HepG2 (cell line): ENCODE measurements at regions of chr21 and their contacts with region 1.

Region 1: DNA sequence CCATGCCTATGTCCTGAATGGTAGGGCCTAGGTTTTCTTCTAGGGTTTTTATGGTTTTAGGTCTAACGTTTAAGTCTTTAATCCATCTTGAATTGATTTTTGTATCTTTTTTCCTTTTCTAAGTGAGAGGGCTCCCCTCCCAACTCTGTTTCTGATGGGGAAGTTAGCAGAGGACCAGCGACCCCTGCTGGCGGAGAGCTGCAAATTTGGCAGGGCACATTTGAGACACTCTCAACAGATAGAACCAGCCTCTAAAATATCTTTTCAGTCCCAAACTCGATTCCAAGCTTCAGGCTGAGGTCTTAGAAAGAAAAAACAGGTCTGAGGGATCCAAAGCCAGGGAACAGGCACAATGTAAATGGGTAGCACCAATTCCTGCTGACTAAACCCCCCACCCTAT is 32.5 kb downstream of the LRRC3 start:
- DNase-seq: peak; percentile 30
- ATAC-seq: no peak
- H3K4me3 ChIP-seq: no peak overlapping the region
- H3K27ac ChIP-seq: no peak overlapping the region
- H3K4me1 ChIP-seq: peaks cover 63% of the 10 kb centered on the region
- H3K27me3 ChIP-seq: no peaks in the 10 kb centered on the region; a peak in 1 of 5 replicates
- CTCF ChIP-seq: peak; percentile 76
- EP300 ChIP-seq: no peak
- POLR2A ChIP-seq: no peak
- RAD21 ChIP-seq: peak; percentile 31; the same call in 1 of the 2 replicates

Region 2: GRCh38 chr21:44299458-44300261 is 188.2 kb before region 1 on chr21 and contains the start of gene PFKL:
- CTCF ChIA-PET with region 1: no interaction called
- POLR2A ChIA-PET with region 1: interaction called, 23 read pairs
- in situ Hi-C with region 1: no loop called
- intact Hi-C with region 1: loop called (anchors 10 kb)
- DNase-seq: peak; percentile 24
- ATAC-seq: peak; percentile 31
- H3K4me3 ChIP-seq: peak within 1 kb of the TSS; percentile 66 to 80 (median 75)
- H3K27ac ChIP-seq: peak within 1 kb of the TSS; percentile 87
- H3K4me1 ChIP-seq: peaks cover 75% of the 10 kb centered on the region
- H3K27me3 ChIP-seq: peaks cover 9 to 26% of the 10 kb centered on the region in 2 experiments
- CTCF ChIP-seq: no peak; the same call in 1 of the 2 replicates
- EP300 ChIP-seq: no peak
- POLR2A ChIP-seq: peak in 1 of 2 experiments; percentile 49; a peak in 2 of 4 replicates
- RAD21 ChIP-seq: no peak; the same call in 1 of the 2 replicates
- total RNA-seq, gene PFKL: 87.6 and 106 TPM in 2 replicates

Region 3: GRCh38 chr21:44414291-44415072 is 73.3 kb before region 1 on chr21:
- CTCF ChIA-PET with region 1: no interaction called
- POLR2A ChIA-PET with region 1: no interaction called
- in situ Hi-C with region 1: no loop called
- intact Hi-C with region 1: no loop called
- DNase-seq: no peak
- ATAC-seq: no peak
- H3K4me3 ChIP-seq: no peak overlapping the region
- H3K27ac ChIP-seq: no peak overlapping the region
- H3K4me1 ChIP-seq: no peaks in the 10 kb centered on the region
- H3K27me3 ChIP-seq: peaks cover 0 to 16% of the 10 kb centered on the region in 2 experiments; a peak in 2 of 5 replicates
- CTCF ChIP-seq: no peak
- EP300 ChIP-seq: no peak
- POLR2A ChIP-seq: no peak
- RAD21 ChIP-seq: no peak

Region 4: DNA sequence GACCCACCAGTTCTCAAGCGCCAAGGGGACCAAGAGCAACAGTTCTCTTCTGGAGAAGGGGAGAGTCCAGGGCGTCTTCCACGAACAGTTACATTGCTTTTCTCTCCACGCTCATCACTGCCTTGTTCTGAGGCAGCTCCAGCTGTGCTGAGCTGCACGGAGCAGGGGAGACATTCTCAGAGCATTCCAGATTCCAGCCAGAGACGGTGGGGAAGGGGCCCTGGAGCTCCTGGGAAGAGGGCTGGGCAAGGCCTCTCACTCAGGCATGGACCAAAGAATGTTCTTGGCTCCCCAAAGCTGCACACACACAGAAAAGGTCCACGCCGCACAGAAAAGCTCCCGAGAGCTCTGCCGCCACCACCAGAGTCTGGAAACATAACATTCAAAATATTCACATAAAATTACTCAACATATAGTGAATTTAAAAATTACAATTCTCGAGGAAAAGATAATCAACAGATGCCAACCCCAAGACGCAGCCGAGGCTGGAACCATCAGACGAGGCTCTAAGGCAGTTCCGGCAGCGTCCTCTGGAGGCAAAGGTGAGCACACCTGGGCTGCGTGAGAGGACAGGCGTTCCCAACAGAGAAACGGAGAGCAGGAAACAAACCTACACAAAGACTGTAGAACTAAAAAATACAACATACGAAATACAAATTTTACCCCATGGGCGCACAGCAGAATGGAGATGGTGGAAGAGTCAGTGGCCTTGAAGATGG is 273.3 kb after region 1 on chr21:
- CTCF ChIA-PET with region 1: no interaction called
- POLR2A ChIA-PET with region 1: no interaction called
- in situ Hi-C with region 1: no loop called
- intact Hi-C with region 1: no loop called
- DNase-seq: peak; percentile 44
- ATAC-seq: peak; percentile 67
- H3K4me3 ChIP-seq: peak overlapping the region; percentile 24 to 49 (median 28)
- H3K27ac ChIP-seq: no peak overlapping the region
- H3K4me1 ChIP-seq: peaks cover 51% of the 10 kb centered on the region
- H3K27me3 ChIP-seq: peaks cover 2 to 41% of the 10 kb centered on the region in 2 experiments; a peak in 4 of 5 replicates
- CTCF ChIP-seq: peak; percentile 70
- EP300 ChIP-seq: no peak
- POLR2A ChIP-seq: no peak
- RAD21 ChIP-seq: no peak

Region 5: DNA sequence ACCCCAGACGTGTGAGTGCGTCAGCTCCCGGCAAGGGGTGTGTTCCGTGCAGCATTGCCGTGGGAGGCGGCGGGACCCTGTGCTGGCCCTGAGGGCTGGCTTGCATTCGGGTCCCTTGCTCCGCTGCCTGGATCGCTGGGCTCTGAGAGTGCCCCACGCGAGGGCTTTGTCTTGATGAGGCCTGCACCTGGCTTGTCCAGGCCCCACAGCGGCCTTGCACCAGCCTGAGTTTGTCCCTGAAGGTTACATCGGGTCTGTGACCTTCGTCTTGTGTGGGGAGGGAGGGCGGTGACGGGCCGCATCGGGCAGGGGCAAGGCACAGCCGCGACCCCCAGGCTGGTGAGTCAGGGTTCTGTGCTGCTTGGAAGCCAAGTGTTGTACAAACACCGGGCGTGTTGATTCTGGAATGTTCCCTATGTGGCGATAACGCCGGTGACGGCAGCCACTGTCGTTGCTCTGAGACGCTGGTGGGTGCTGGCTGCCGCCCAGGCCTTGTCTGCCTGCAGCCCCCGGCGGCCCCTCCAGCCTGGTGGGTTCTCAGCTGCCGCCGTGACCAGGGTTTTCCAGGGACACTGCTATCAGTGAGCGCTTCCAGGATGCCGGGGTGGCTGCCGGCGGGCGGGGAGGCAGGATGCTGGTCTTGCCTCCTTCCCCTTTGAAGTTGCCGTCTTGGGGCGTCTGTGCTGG is 494.9 kb after region 1 on chr21:
- CTCF ChIA-PET with region 1: no interaction called
- POLR2A ChIA-PET with region 1: no interaction called
- in situ Hi-C with region 1: no loop called
- intact Hi-C with region 1: no loop called
- DNase-seq: peak; percentile 80
- ATAC-seq: peak; percentile 4
- H3K4me3 ChIP-seq: peak overlapping the region in 1 of 3 experiments; percentile 76; a peak in 2 of 6 replicates
- H3K27ac ChIP-seq: peak overlapping the region; percentile 25
- H3K4me1 ChIP-seq: peaks cover 71% of the 10 kb centered on the region
- H3K27me3 ChIP-seq: peaks cover 2 to 5% of the 10 kb centered on the region in 2 experiments; a peak in 1 of 5 replicates
- CTCF ChIP-seq: no peak
- EP300 ChIP-seq: no peak
- POLR2A ChIP-seq: no peak
- RAD21 ChIP-seq: no peak